ENCODE measurements at regions of chr17 and their contacts with region 1.

Region 1: GRCh38 chr17:59004338-59005111 is 102.2 kb downstream of the TRIM37 start:
- DNase-seq: peak; percentile 10 to 79
- H3K4me3 ChIP-seq: no peak overlapping the region
- H3K27ac ChIP-seq: no peak overlapping the region
- H3K4me1 ChIP-seq: no peaks in the 10 kb centered on the region
- H3K27me3 ChIP-seq: no peaks in the 10 kb centered on the region
- CTCF ChIP-seq: peak in 2 of 3 experiments; percentile 81 to 89; a peak in 3 of 4 replicates
- EP300 ChIP-seq: no peak
- POLR2A ChIP-seq: no peak
- RAD21 ChIP-seq: peak; percentile 97 to 98

Region 2: DNA sequence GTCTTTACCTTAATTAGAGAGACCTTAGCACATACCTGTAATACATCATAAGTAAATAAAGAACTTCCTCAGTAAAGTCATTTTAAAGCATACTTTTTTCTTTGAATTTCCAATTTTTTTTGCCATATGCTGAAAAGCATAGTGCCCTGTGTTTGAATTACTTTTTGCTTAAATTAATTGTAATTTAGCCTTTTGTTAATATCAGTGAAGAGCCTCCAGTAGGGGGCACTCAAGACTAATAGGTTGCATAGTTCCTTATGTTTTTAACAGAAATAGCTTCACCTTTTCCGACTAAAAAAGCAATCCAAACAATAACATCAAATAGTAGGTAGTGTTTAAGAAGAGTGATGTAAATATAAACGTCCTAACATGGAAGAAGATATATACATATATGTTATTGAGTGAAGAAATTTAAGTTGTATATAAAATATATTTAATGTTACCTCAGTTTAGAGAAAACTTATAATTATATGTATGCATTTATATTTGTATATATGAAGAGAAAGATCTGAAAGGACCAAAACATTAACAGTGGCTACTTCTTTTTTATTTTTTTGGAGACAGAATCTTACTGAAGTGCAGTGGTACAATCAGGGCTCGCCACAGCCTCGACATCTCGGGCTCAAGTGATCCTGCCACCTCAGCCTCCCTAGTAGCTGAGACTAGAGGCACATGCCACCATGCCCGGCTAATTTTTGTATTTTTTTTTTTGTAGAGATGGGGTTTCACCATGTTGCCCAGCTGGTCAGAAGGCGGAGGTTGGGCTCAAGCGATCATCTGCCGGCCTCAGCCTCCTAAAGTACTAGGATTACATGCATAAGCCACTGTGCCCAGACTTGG is 293.4 kb before region 1 on chr17:
- CTCF ChIA-PET with region 1: interaction called, 28 read pairs
- POLR2A ChIA-PET with region 1: interaction called, 4 read pairs
- DNase-seq: peak in 1 of 2 experiments; percentile 54
- H3K4me3 ChIP-seq: no peak overlapping the region
- H3K27ac ChIP-seq: no peak overlapping the region
- H3K4me1 ChIP-seq: no peaks in the 10 kb centered on the region
- H3K27me3 ChIP-seq: no peaks in the 10 kb centered on the region
- CTCF ChIP-seq: peak in 2 of 3 experiments; percentile 41 to 45; a peak in 2 of 4 replicates
- EP300 ChIP-seq: no peak
- POLR2A ChIP-seq: no peak
- RAD21 ChIP-seq: peak; percentile 76 to 85

Region 3: DNA sequence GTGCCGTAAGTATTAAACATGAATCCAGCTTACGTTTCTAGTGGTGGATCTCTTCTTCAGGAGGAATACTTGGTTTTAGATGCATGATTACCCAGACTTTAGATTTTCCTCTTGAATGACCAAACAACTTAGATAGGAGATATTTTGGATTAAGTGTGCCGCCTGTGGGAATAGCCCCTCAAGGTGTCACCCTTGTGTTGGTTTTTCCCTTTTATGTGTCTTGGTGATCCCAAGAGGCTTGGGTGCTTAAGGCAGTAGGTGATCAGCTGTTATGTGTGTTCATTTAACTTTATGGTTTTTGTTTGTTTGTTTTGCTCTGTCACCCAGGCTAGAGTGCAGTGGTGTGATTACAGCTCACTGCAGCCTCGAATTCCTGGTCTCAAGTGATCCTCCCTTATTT is 133.8 kb before region 1 on chr17:
- CTCF ChIA-PET with region 1: interaction called, 10 read pairs
- POLR2A ChIA-PET with region 1: no interaction called
- DNase-seq: no peak
- H3K4me3 ChIP-seq: no peak overlapping the region
- H3K27ac ChIP-seq: no peak overlapping the region
- H3K4me1 ChIP-seq: no peaks in the 10 kb centered on the region
- H3K27me3 ChIP-seq: no peaks in the 10 kb centered on the region
- CTCF ChIP-seq: no peak
- EP300 ChIP-seq: no peak
- POLR2A ChIP-seq: no peak
- RAD21 ChIP-seq: peak; percentile 30 to 52; a peak in 3 of 4 replicates

Region 4: GRCh38 chr17:58991718-58992331 is 12.7 kb before region 1 on chr17:
- CTCF ChIA-PET with region 1: interaction called, 11 read pairs
- POLR2A ChIA-PET with region 1: no interaction called
- DNase-seq: no peak
- H3K4me3 ChIP-seq: no peak overlapping the region
- H3K27ac ChIP-seq: no peak overlapping the region
- H3K4me1 ChIP-seq: peaks cover 0 to 3% (median 1%) of the 10 kb centered on the region in 4 experiments; a peak in 1 of 7 replicates
- H3K27me3 ChIP-seq: no peaks in the 10 kb centered on the region
- CTCF ChIP-seq: no peak
- EP300 ChIP-seq: no peak
- POLR2A ChIP-seq: no peak
- RAD21 ChIP-seq: no peak

Region 5: DNA sequence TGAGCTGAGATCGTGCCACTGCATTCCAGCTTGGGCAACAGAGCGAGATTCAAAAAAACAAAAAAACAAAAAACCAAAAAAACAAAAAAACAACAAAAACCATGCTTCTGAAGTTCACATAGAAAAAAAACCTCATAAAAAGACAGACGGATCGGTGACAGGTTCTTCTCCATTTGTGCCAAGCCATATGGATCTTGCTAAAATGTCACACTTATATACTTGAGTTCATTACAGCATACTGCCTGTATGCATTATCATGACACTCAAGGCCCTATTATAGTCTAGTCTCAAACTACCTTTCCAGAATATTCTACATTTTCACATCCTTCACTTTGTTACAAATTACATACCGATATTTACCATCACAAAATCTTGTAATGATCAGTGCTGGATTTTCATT is 31.2 kb after region 1 on chr17:
- CTCF ChIA-PET with region 1: no interaction called
- POLR2A ChIA-PET with region 1: no interaction called
- DNase-seq: no peak
- H3K4me3 ChIP-seq: no peak overlapping the region
- H3K27ac ChIP-seq: no peak overlapping the region
- H3K4me1 ChIP-seq: no peaks in the 10 kb centered on the region
- H3K27me3 ChIP-seq: no peaks in the 10 kb centered on the region
- CTCF ChIP-seq: no peak
- EP300 ChIP-seq: no peak
- POLR2A ChIP-seq: no peak
- RAD21 ChIP-seq: no peak